Breast epithelium (tissue), 4 donors: ENCODE measurements at regions of chr7 and their contacts with region 1.

Region 1: GRCh38 chr7:67566101-67566500 is 569.5 kb downstream of the TYW1 start:
- DNase-seq: no peak
- H3K4me3 ChIP-seq: no peak overlapping the region
- H3K27ac ChIP-seq: no peak overlapping the region
- H3K4me1 ChIP-seq: no peaks in the 10 kb centered on the region
- H3K27me3 ChIP-seq: no peaks in the 10 kb centered on the region
- CTCF ChIP-seq: no peak
- POLR2A ChIP-seq: no peak

Region 2: DNA sequence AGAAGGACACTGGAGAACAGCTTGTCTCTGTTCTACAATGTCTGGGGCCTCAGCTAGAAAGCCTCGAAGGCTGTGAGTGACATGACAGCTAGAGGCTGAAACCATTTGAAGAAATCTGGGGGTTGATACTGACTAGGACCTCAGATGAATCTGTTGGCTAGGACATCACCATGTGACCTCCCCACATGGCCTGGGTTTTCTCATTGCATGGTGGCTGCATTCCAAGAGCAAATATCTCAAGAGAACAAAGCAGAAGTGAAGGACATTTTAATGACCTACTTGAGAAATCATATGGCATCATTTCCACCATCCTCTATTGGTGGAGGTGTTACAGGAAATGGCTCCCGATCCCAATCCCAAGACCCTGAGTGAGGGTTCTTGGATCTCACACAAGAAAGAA is 1581.5 kb after region 1 on chr7:
- intact Hi-C with region 1: loop called (anchors 5 kb)
- DNase-seq: no peak
- H3K4me3 ChIP-seq: no peak overlapping the region
- H3K27ac ChIP-seq: no peak overlapping the region
- H3K4me1 ChIP-seq: no peaks in the 10 kb centered on the region
- H3K27me3 ChIP-seq: no peaks in the 10 kb centered on the region
- CTCF ChIP-seq: no peak
- POLR2A ChIP-seq: no peak